Sciatic nerve (tissue), 2 donors: ENCODE measurements at regions of chr13 and their contacts with region 1.

Region 1: DNA sequence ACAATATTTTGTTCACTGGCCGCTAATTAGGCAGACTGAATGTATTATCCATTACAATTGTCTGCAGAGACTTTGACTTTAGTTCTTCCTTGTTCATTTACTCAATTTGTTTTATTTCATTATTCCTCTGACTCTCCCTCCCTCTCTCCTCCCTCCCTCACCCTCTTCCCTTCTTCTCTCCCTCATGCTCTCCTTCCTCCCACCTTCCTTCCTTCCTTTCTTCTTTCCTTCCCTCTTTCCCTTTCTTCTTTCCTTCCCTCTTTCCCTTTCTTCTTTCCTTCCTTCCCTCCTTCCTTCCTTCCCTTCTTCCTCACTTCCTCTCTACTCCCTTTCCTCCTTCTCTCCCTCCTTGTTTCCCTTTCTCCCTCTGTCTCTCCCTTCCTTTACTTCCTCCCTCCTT is 1591.0 kb upstream of the SLC10A2 start:
- DNase-seq: no peak
- ATAC-seq: no peak

Region 2: GRCh38 chr13:104683789-104684188 is 26.6 kb after region 1 on chr13:
- intact Hi-C with region 1: no loop called
- DNase-seq: no peak
- ATAC-seq: no peak

Region 3: DNA sequence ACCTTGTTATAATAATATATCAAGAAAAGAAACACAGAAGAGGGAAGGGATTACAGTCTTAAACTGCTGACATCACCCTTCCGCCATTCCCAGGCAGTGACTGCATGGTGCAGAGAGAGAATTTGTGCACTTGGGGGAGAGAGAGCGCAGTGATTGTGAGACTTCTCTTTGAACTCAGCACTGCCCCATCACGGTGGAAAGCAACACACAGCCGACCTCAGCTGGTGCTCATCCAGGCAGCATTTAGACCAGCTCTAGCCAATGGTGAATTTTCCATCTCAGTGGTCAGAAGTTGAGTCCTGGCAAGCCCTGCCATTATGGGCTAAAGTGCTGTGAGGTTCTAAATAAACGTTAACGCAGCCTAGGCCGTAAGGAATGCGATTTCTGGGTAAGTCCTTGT is 196.8 kb after region 1 on chr13:
- intact Hi-C with region 1: loop called (anchors 10 kb)
- DNase-seq: no peak
- ATAC-seq: no peak

Region 4: DNA sequence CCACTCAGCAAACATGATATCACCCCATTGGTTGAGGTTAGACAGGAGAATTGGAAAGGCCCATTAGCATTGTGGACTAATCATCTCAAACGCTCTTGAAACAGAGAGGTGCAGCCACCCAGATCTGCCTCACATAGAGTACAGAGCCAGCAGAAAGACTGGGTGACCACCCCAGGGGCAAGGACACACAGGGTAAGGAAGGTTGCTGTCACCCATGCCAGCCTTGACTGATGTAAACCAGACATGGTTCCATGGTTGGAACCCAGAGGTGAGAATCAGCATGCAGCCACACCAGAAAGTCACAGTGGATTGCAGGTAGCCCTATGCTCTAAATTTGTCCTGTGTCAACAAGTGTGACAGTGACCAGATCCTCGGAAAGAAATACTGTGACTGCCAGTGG is 609.4 kb after region 1 on chr13:
- intact Hi-C with region 1: no loop called
- DNase-seq: no peak
- ATAC-seq: no peak